ENCODE measurements at regions of chr12 and their contacts with region 1.

Region 1: DNA sequence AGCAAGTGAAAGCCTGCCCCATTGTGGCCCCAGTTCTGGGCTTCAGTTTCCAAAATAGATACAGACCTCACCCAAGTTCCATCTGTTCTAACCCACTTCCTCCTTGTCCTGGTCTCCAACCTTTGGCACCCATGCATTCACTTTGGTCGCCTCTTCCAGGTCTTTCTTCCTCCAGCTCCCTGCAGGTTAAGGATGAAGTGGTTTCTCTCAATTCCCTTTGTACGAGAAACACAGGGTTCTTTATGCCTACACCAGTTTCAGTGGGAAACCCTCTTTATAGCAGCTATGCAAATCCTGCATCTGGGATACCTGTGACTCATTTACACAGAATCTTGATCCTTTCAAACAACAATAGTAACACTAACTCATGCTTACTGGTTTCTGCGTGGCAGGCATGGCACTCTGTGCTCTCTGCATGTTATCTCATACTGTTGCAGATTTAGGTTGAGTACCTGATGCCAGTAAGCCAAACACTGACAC is 110.6 kb upstream of the AMIGO2 start:
- DNase-seq: no peak
- ATAC-seq: peak; percentile 46
- H3K4me3 ChIP-seq: no peak overlapping the region
- H3K27ac ChIP-seq: no peak overlapping the region
- H3K4me1 ChIP-seq: peaks cover 27% of the 10 kb centered on the region
- H3K27me3 ChIP-seq: no peaks in the 10 kb centered on the region
- CTCF ChIP-seq: no peak

Region 2: GRCh38 chr12:47226199-47226598 is 35.9 kb after region 1 on chr12:
- intact Hi-C with region 1: loop called (anchors 2 kb)
- DNase-seq: no peak
- ATAC-seq: no peak
- H3K4me3 ChIP-seq: no peak overlapping the region
- H3K27ac ChIP-seq: no peak overlapping the region
- H3K4me1 ChIP-seq: peaks cover 11% of the 10 kb centered on the region
- H3K27me3 ChIP-seq: no peaks in the 10 kb centered on the region
- CTCF ChIP-seq: no peak

Measured in upper lobe of right lung (tissue), 1 donor.